MCF 10A (cell line): ENCODE measurements at regions of chr12 and their contacts with region 1.

Region 1: GRCh38 chr12:53180220-53180930 is at the starts of genes CSAD and ZNF740:
- DNase-seq: peak; percentile 96
- H3K4me3 Mint-ChIP-seq: peak within 1 kb of the TSS; percentile 95
- H3K27ac Mint-ChIP-seq: peak within 1 kb of the TSS; percentile 94
- H3K4me1 Mint-ChIP-seq: peaks cover 29% of the 10 kb centered on the region
- H3K27me3 Mint-ChIP-seq: no peaks in the 10 kb centered on the region
- CTCF ChIP-seq: no peak
- total RNA-seq, gene CSAD: 22.7 and 30.8 TPM in 2 replicates
- total RNA-seq, gene ZNF740: 34.9 and 36.2 TPM in 2 replicates

Region 2: GRCh38 chr12:52004042-52004648 is 1176.2 kb before region 1 on chr12:
- CTCF ChIA-PET with region 1: no interaction called
- POLR2A ChIA-PET with region 1: no interaction called
- intact Hi-C with region 1: no loop called
- DNase-seq: peak; percentile 60
- H3K4me3 Mint-ChIP-seq: no peak overlapping the region
- H3K27ac Mint-ChIP-seq: no peak overlapping the region
- H3K4me1 Mint-ChIP-seq: no peaks in the 10 kb centered on the region
- H3K27me3 Mint-ChIP-seq: peaks cover 20% of the 10 kb centered on the region
- CTCF ChIP-seq: peak; percentile 52

Region 3: DNA sequence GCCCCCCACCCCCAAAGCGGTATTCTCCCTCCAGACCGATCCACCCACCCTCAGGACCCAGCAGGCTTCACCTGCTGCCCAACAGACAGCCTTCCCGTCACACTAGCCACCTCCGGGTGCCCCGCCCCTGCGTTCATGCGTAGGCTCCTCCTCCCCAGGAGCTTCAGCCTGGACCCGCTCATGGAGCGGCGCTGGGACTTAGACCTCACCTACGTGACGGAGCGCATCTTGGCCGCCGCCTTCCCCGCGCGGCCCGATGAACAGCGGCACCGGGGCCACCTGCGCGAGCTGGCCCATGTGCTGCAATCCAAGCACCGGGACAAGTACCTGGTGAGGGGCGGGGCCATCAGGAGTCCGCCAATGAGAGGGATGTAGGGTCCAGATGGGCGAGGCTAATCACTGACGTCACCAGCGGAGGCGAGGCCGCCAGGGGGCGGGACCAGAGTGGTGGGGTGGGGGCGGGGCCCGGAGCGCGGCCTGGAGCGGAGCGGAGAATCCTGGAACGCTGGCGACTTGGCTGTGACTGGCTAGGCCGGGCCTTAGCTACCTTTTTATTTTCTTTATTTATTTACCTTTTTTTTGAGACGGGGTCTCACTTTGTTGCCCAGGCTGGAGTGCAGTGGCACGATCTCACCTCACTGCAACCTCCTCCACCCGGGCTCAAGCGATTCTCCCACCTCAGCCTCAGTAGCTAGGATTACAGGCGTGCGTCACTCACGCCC is 126.1 kb before region 1 on chr12:
- CTCF ChIA-PET with region 1: interaction called, 3 read pairs
- POLR2A ChIA-PET with region 1: interaction called, 11 read pairs
- intact Hi-C with region 1: no loop called
- DNase-seq: peak; percentile 98
- H3K4me3 Mint-ChIP-seq: peak overlapping the region; percentile 80
- H3K27ac Mint-ChIP-seq: peak overlapping the region; percentile 97
- H3K4me1 Mint-ChIP-seq: peaks cover 32% of the 10 kb centered on the region
- H3K27me3 Mint-ChIP-seq: no peaks in the 10 kb centered on the region
- CTCF ChIP-seq: no peak

Region 4: GRCh38 chr12:53159195-53159839 is 21.1 kb before region 1 on chr12:
- CTCF ChIA-PET with region 1: interaction called, 13 read pairs
- POLR2A ChIA-PET with region 1: interaction called, 11 read pairs
- intact Hi-C with region 1: no loop called
- DNase-seq: peak; percentile 85
- H3K4me3 Mint-ChIP-seq: no peak overlapping the region
- H3K27ac Mint-ChIP-seq: no peak overlapping the region
- H3K4me1 Mint-ChIP-seq: peaks cover 8% of the 10 kb centered on the region
- H3K27me3 Mint-ChIP-seq: no peaks in the 10 kb centered on the region
- CTCF ChIP-seq: peak; percentile 94

Region 5: DNA sequence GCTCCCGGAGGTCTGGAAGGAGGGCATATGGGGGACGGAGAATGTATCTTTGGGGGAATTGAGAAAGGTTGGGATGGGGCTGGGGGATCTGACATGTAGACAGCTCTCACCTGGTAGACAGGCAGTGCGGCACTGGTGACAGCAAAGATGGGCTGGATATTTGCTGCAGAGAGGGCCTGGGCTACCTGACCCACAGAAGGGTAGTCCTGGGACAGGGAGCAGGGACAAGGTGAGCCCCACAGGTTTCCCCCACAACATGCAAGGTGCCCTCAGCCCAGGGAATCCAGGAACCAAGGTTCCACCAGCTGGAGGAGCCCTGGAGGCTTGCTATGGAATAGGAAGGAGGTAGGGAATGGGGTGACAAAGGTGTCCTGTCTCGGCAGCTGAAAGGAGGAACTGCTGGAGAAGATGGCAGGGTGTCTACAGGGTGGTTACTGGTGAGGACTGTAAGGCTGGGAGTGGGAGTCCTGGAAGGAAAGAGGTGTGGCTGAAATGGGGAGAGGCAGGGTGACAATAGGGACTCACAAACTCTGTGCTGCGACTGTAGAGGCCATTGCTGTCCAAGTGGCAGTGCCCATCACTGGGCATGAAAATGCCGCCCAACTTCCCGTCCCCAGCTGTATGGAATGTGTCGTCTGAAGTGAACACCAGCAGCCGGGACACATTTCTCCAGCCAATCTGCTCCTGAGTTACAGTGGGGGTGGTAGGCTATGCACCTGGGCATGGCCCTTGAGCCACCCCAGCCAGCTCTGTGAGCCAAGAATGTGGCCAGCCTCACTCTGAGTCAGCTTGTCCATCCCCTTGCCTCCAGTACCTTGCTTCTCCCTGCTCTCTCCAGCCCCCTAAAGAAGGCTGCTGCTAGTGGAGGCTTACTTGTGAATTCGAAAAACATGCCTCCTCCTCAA is 15.4 kb after region 1 on chr12:
- CTCF ChIA-PET with region 1: interaction called, 3 read pairs
- POLR2A ChIA-PET with region 1: interaction called, 18 read pairs
- intact Hi-C with region 1: no loop called
- DNase-seq: peak; percentile 45
- H3K4me3 Mint-ChIP-seq: no peak overlapping the region
- H3K27ac Mint-ChIP-seq: no peak overlapping the region
- H3K4me1 Mint-ChIP-seq: peaks cover 21% of the 10 kb centered on the region
- H3K27me3 Mint-ChIP-seq: no peaks in the 10 kb centered on the region
- CTCF ChIP-seq: no peak

Region 6: DNA sequence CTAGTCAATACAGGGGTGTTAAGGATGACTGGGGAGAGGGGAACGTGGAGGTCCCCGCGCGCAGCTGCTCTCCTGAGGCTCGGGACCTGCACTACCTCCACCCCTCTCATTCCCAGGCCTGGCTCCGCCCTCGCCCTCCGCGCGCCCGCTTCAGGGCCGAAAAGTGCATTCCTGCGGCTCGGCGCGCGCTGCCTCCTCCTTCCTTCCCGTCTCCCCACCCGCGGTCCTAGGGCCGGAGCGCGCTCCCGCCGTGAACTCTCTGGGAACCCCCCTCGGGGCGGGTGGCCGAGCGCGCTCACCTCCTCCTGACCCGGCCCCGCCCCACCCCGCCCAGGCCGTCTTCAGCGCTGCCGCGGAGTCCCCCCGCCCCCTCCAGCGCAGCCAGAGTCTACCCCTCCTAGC is 40.4 kb after region 1 on chr12:
- CTCF ChIA-PET with region 1: interaction called, 3 read pairs
- POLR2A ChIA-PET with region 1: interaction called, 21 read pairs
- intact Hi-C with region 1: no loop called
- DNase-seq: peak; percentile 93
- H3K4me3 Mint-ChIP-seq: peak overlapping the region; percentile 83
- H3K27ac Mint-ChIP-seq: peak overlapping the region; percentile 80
- H3K4me1 Mint-ChIP-seq: peaks cover 69% of the 10 kb centered on the region
- H3K27me3 Mint-ChIP-seq: no peaks in the 10 kb centered on the region
- CTCF ChIP-seq: no peak